A673 (cell line): ENCODE measurements at regions of chr14 and their contacts with region 1.

Region 1: DNA sequence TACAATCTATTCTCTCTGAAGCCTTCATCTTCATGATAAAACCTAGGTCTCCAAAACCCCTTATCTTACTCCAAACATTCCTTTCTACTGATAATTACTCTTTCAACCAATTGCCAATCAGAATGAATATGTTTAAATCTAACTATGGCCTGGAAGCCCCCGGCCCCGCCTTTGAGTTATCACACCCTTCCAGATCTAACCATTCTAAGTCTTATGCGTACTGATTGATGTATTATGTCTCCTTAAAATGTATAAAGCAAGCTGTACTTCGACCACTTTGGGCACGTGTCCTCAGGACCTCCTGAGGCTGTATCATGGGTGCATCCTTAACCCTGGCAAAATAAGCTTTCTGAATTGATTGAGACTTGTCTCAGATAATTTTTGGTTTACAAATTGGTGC is 14.4 kb downstream of the PABPN1 start:
- DNase-seq: no peak
- H3K4me3 ChIP-seq: no peak overlapping the region
- H3K27ac ChIP-seq: no peak overlapping the region
- H3K4me1 ChIP-seq: no peaks in the 10 kb centered on the region
- H3K27me3 ChIP-seq: no peaks in the 10 kb centered on the region
- CTCF ChIP-seq: no peak

Region 2: DNA sequence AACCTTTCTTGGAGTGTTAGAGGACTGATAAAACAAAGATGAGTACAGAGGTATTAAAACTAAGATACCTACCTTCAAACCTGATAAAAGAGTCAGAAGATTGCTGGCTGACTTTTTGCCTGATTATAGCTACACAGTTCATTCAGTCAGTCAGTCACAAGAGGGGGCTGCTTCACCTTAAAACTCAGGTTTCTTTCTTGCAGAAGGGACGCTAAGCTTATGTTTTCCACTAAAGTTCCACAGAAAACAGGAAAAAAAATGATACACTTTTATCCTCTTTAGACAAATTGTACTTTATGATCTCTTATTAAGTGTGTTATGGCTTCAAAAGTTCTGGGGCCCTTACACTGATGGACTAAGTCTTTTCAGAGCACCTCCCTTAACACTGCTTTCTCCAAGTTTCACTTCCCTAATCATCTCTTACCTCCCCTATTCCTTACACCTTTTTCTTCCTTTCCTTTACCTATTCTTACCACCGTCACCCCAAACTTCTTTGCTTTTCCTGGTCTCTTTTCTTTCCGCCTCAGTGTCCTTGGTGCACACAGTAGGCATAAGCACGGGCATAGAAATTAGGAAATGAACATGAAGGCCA is 1213.3 kb before region 1 on chr14:
- CTCF ChIA-PET with region 1: no interaction called
- POLR2A ChIA-PET with region 1: no interaction called
- intact Hi-C with region 1: no loop called
- DNase-seq: peak; percentile 26
- H3K4me3 ChIP-seq: no peak overlapping the region
- H3K27ac ChIP-seq: no peak overlapping the region
- H3K4me1 ChIP-seq: peaks cover 3% of the 10 kb centered on the region
- H3K27me3 ChIP-seq: peaks cover 3% of the 10 kb centered on the region
- CTCF ChIP-seq: peak; percentile 51

Region 3: GRCh38 chr14:23275412-23275811 is 60.2 kb before region 1 on chr14:
- CTCF ChIA-PET with region 1: no interaction called
- POLR2A ChIA-PET with region 1: no interaction called
- intact Hi-C with region 1: no loop called
- DNase-seq: no peak
- H3K4me3 ChIP-seq: no peak overlapping the region
- H3K27ac ChIP-seq: no peak overlapping the region
- H3K4me1 ChIP-seq: peaks cover 6% of the 10 kb centered on the region
- H3K27me3 ChIP-seq: no peaks in the 10 kb centered on the region
- CTCF ChIP-seq: no peak

Region 4: GRCh38 chr14:23352511-23353432 is 17.1 kb after region 1 on chr14 and contains the start of gene SLC22A17:
- CTCF ChIA-PET with region 1: no interaction called
- POLR2A ChIA-PET with region 1: no interaction called
- intact Hi-C with region 1: loop called (anchors 1 kb)
- DNase-seq: peak; percentile 91
- H3K4me3 ChIP-seq: peak within 1 kb of the TSS; percentile 76
- H3K27ac ChIP-seq: peak within 1 kb of the TSS; percentile 61
- H3K4me1 ChIP-seq: peaks cover 5% of the 10 kb centered on the region
- H3K27me3 ChIP-seq: no peaks in the 10 kb centered on the region
- CTCF ChIP-seq: no peak
- total RNA-seq, gene SLC22A17: 23.0 and 28.4 TPM in 2 replicates